ENCODE measurements at regions of chr7 and their contacts with region 1.

Region 1: DNA sequence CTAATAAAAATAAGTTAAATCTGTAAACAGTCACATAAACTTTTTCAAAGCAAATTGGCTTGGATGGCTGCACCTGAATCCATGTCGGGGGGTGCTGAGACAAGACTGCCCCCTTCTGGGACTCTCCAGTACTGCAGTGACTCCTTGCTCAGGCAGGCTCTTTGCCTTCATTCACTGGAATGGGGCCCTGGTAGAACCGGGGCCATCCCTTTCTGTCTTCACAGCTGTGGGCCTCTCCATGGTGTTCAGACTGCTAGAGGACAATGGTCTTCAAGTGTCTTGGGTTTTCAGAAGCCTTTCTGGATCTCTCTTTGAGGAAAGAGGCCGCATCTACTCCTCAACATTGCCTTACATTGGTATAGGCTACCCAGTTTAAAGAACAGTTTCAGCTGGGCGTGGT is 16.1 kb upstream of the IMPDH1 start:
- DNase-seq: peak; percentile 67 to 80 (median 74)
- H3K4me3 ChIP-seq: no peak overlapping the region
- H3K4me3 Mint-ChIP-seq: no peak overlapping the region
- H3K27ac ChIP-seq: no peak overlapping the region
- H3K27ac Mint-ChIP-seq: no peak overlapping the region
- H3K4me1 ChIP-seq: no peaks in the 10 kb centered on the region
- H3K4me1 Mint-ChIP-seq: peaks cover 0 to 1% (median 0%) of the 10 kb centered on the region in 4 donors
- H3K27me3 ChIP-seq: no peaks in the 10 kb centered on the region
- H3K27me3 Mint-ChIP-seq: peaks cover 7 to 8% of the 10 kb centered on the region in 2 donors

Region 2: GRCh38 chr7:128356546-128357216 is 69.2 kb before region 1 on chr7:
- CTCF ChIA-PET with region 1: interaction called, 12 read pairs
- POLR2A ChIA-PET with region 1: no interaction called
- intact Hi-C with region 1: no loop called
- DNase-seq: no peak
- H3K4me3 ChIP-seq: no peak overlapping the region
- H3K4me3 Mint-ChIP-seq: no peak overlapping the region
- H3K27ac ChIP-seq: no peak overlapping the region
- H3K27ac Mint-ChIP-seq: no peak overlapping the region
- H3K4me1 ChIP-seq: peaks cover 8% of the 10 kb centered on the region
- H3K4me1 Mint-ChIP-seq: peaks cover 2 to 18% (median 8%) of the 10 kb centered on the region in 4 donors
- H3K27me3 ChIP-seq: peaks cover 7% of the 10 kb centered on the region
- H3K27me3 Mint-ChIP-seq: peaks cover 14 to 19% of the 10 kb centered on the region in 2 donors

Region 3: DNA sequence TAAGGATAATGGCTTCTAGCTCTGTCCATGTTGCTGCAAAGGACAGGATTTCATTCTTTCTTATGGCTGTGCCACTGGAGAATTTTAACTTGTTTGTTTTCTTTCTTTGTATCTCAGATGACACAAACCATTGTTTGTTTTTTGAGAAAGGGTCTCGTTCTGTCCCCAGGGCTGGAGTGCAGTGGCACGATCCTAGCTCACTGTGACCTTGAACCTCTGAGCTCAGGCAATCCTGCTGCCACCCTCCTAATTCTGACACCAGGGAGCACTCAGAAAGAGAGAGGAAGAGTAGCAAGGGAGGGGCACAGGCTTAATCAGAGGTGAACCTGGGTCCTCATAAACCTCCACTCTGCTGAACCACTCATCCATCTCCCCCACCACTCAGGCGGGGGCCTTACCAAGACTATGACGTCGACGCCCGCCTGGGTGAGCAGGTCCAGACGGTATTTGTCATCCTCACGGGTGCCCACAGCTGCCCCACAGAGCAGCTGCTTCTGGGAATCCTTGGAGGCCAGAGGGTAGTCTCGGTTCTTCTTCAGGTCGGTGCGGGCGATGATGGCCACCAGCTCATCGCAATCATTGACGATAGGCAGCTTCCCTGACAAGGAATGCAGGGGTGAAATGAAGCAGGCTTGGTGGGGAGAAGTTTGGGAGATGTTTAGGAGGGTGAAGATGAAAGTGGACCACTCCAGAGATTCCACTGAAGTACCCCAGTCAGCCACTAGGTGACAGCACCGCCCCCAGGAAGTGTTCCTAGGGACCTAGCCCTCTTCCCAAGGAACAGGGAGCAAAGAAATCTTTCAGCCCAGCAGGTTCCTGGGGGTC is 27.6 kb before region 1 on chr7:
- CTCF ChIA-PET with region 1: interaction called, 475 read pairs
- POLR2A ChIA-PET with region 1: interaction called, 5 read pairs
- intact Hi-C with region 1: loop called (anchors 1 kb)
- DNase-seq: peak in 2 of 5 donors; percentile 14 to 32
- H3K4me3 ChIP-seq: no peak overlapping the region
- H3K4me3 Mint-ChIP-seq: no peak overlapping the region
- H3K27ac ChIP-seq: no peak overlapping the region
- H3K27ac Mint-ChIP-seq: no peak overlapping the region
- H3K4me1 ChIP-seq: no peaks in the 10 kb centered on the region
- H3K4me1 Mint-ChIP-seq: peaks cover 3 to 10% (median 5%) of the 10 kb centered on the region in 4 donors
- H3K27me3 ChIP-seq: no peaks in the 10 kb centered on the region
- H3K27me3 Mint-ChIP-seq: no peaks in the 10 kb centered on the region

Region 4: GRCh38 chr7:128415217-128415785 is 10.5 kb before region 1 on chr7:
- CTCF ChIA-PET with region 1: interaction called, 475 read pairs
- POLR2A ChIA-PET with region 1: interaction called, 5 read pairs
- intact Hi-C with region 1: loop called (anchors 1 kb)
- DNase-seq: no peak
- H3K4me3 ChIP-seq: no peak overlapping the region
- H3K4me3 Mint-ChIP-seq: no peak overlapping the region
- H3K27ac ChIP-seq: no peak overlapping the region
- H3K27ac Mint-ChIP-seq: no peak overlapping the region
- H3K4me1 ChIP-seq: peaks cover 3% of the 10 kb centered on the region
- H3K4me1 Mint-ChIP-seq: peaks cover 2 to 3% (median 3%) of the 10 kb centered on the region in 4 donors
- H3K27me3 ChIP-seq: no peaks in the 10 kb centered on the region
- H3K27me3 Mint-ChIP-seq: peaks cover 0 to 3% of the 10 kb centered on the region in 2 donors

Region 5: DNA sequence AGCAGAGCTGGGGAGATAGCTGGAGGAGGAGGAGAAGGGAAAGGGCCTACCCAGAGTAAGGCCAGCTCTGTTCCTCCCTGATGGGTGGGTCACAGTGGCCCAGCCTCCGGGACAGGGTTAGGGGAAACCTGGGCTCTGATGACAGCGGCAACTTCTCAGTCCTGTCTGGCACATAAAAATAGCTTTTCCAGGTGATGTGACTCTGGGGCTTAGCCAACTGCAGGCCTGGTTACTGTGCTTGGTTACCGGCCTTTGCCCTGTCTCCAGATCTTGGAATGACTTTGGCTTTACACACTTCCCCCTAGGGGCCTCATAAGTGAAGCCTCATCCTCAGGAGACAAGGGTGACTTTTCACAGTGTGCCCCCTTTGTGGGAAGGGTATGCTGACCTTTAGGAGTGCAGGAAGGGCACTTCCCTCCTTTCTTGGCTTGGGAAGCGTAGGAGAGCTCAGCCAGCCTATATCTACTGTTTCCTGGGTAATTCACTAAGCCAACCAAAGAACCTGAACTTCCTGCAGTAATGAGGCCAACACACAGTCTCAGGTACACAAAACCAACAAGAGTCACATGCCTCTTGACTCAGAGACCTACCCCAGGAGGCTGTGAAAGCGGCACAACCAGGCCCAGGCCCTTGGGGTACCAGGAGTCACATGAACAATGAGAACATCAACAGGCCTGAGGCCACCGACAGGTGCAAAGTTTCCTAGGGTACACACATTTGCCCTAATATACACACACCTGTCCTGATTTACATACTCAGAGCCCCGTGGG is 18.2 kb after region 1 on chr7:
- CTCF ChIA-PET with region 1: interaction called, 23 read pairs
- POLR2A ChIA-PET with region 1: no interaction called
- intact Hi-C with region 1: no loop called
- DNase-seq: peak in 1 of 5 donors; percentile 35
- H3K4me3 ChIP-seq: no peak overlapping the region
- H3K4me3 Mint-ChIP-seq: no peak overlapping the region
- H3K27ac ChIP-seq: no peak overlapping the region
- H3K27ac Mint-ChIP-seq: no peak overlapping the region
- H3K4me1 ChIP-seq: no peaks in the 10 kb centered on the region
- H3K4me1 Mint-ChIP-seq: peaks cover 0 to 3% (median 0%) of the 10 kb centered on the region in 4 donors
- H3K27me3 ChIP-seq: no peaks in the 10 kb centered on the region
- H3K27me3 Mint-ChIP-seq: no peaks in the 10 kb centered on the region

Region 6: DNA sequence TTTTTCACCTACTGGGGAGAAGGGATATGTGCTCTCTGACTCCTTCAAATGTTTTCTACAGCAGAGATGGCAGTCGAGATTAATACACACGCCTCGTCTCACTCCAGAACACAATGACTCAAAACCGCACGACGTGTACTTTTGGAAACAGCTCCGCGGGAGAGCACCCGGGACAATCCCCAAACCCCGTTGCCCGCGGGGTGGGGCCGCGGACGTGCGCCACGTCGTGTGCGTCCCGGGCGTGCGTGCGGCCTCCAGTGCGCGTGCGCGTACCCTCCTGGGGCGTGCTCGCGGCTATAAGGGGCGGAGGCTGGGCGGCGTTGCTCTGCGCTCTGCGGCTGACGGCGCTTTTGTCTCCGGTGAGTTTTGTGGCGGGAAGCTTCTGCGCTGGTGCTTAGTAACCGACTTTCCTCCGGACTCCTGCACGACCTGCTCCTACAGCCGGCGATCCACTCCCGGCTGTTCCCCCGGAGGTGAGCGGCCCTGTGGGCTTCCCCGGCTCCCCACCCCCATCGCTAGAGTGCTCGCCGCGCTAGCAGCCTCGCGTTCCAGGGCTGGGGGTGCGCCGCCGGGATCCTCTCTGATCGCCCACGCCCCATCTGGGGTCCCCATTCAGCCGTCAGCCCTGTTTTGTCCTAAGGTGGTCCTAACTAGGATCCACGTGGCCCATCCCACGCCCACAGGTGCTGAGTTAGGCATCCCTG is 29.9 kb after region 1 on chr7 and contains the start of gene HILPDA:
- CTCF ChIA-PET with region 1: interaction called, 469 read pairs
- POLR2A ChIA-PET with region 1: interaction called, 27 read pairs
- intact Hi-C with region 1: loop called (anchors 1 kb)
- DNase-seq: peak; percentile 92 to 97 (median 94)
- H3K4me3 ChIP-seq: peak within 1 kb of the TSS; percentile 70 to 89
- H3K4me3 Mint-ChIP-seq: peak within 1 kb of the TSS; percentile 86 to 97 (median 94)
- H3K27ac ChIP-seq: peak within 1 kb of the TSS; percentile 76
- H3K27ac Mint-ChIP-seq: peak within 1 kb of the TSS; percentile 84 to 98 (median 96)
- H3K4me1 ChIP-seq: peaks cover 25% of the 10 kb centered on the region
- H3K4me1 Mint-ChIP-seq: peaks cover 17 to 30% (median 22%) of the 10 kb centered on the region in 4 donors
- H3K27me3 ChIP-seq: no peaks in the 10 kb centered on the region
- H3K27me3 Mint-ChIP-seq: no peaks in the 10 kb centered on the region
- total RNA-seq, gene HILPDA: 3.4 to 4.5 TPM